WTC11 (cell line): ENCODE measurements at regions of chr1 and their contacts with region 1.

Region 1: GRCh38 chr1:39901698-39902459 is at the start of gene MYCL:
- DNase-seq: peak; percentile 97
- ATAC-seq: peak; percentile 81
- H3K4me3 Mint-ChIP-seq: peak within 1 kb of the TSS; percentile 86
- H3K27ac Mint-ChIP-seq: peak within 1 kb of the TSS; percentile 74; the same call in 1 of the 2 replicates
- H3K4me1 Mint-ChIP-seq: peaks cover 46% of the 10 kb centered on the region
- H3K27me3 Mint-ChIP-seq: peaks cover 30% of the 10 kb centered on the region
- CTCF ChIP-seq: peak; percentile 56
- total RNA-seq, gene MYCL: 31.0 to 32.6 TPM (median 32.2 TPM) in 3 replicates

Region 2: DNA sequence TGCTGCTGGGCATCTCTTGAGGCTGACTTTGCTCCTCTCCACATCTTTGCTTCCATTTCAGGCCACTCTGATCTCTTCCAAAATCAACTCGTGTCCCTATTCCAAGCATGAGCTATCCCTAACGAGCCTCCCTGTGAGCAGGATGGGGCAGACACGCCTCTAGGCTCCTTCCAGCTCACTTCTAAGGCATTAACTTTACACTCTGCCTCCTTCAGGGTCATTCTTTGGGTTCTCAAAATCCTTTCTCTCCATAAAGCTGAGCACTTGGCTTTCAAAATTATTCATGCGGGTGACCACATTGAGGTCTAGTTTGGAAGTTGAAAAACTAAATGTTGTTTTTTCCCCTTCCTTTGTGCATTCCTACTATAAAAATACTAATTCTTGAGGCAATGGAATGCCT is 79.8 kb before region 1 on chr1:
- CTCF ChIA-PET with region 1: interaction called, 49 read pairs
- POLR2A ChIA-PET with region 1: interaction called, 3 read pairs
- DNase-seq: no peak
- ATAC-seq: no peak
- H3K4me3 Mint-ChIP-seq: no peak overlapping the region
- H3K27ac Mint-ChIP-seq: no peak overlapping the region
- H3K4me1 Mint-ChIP-seq: peaks cover 3% of the 10 kb centered on the region; the same call in 1 of the 2 replicates
- H3K27me3 Mint-ChIP-seq: peaks cover 5% of the 10 kb centered on the region; the same call in 1 of the 2 replicates
- CTCF ChIP-seq: no peak

Region 3: DNA sequence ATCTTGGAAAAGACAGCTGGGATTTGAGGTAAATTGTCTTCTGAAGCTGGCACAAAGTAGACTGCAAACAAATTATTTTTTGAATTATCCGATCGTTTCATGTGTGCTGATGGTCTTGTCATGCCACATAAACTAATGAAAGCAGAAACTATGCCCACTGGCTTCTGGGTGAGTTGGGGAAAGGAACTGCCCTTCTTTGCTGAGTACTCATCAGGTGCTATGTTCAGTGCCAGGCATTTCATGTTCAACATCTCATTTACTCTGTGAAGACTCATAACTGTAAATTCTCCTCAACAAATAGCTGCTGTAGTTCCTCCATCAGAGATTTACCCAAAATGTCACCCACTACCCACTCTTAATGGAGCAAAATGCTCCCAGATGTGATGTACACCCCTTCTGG is 19.7 kb before region 1 on chr1:
- CTCF ChIA-PET with region 1: interaction called, 49 read pairs
- POLR2A ChIA-PET with region 1: interaction called, 15 read pairs
- DNase-seq: no peak
- ATAC-seq: no peak
- H3K4me3 Mint-ChIP-seq: peak overlapping the region; percentile 90
- H3K27ac Mint-ChIP-seq: no peak overlapping the region
- H3K4me1 Mint-ChIP-seq: peaks cover 38% of the 10 kb centered on the region
- H3K27me3 Mint-ChIP-seq: no peaks in the 10 kb centered on the region
- CTCF ChIP-seq: no peak

Region 4: GRCh38 chr1:39973503-39974135 is 71.7 kb after region 1 on chr1:
- CTCF ChIA-PET with region 1: interaction called, 29 read pairs
- POLR2A ChIA-PET with region 1: interaction called, 5 read pairs
- DNase-seq: peak; percentile 82
- ATAC-seq: peak; percentile 83
- H3K4me3 Mint-ChIP-seq: no peak overlapping the region
- H3K27ac Mint-ChIP-seq: peak overlapping the region; percentile 12
- H3K4me1 Mint-ChIP-seq: peaks cover 15% of the 10 kb centered on the region
- H3K27me3 Mint-ChIP-seq: no peaks in the 10 kb centered on the region; the same call in 1 of the 2 replicates
- CTCF ChIP-seq: peak; percentile 97